Naive thymus-derived CD4-positive, alpha-beta T cell (primary cell): ENCODE measurements at regions of chr4 and their contacts with region 1.

Region 1: DNA sequence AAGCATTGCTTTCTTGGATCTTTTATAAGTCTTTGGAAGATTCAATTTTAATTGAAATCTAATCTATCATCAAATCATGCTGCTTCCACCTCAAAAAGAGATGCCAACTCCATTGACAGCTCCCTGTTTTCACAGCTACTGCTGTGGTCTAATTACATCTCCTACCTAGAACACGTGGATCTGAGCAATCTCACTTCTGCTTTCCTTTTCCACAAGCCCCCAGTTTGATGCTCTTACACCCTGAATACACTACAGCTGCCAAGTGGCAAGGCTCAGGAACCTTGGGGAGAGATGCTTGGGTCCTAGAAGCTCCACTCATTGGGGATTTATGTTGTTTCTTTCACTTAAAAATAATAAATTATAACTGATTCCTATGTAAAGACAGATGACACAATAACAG is 172.0 kb downstream of the CFAP299 start:
- DNase-seq: no peak
- ATAC-seq: no peak
- H3K4me3 ChIP-seq: no peak overlapping the region
- H3K4me3 Mint-ChIP-seq: peak overlapping the region in 1 of 10 donors; percentile 9
- H3K27ac ChIP-seq: no peak overlapping the region
- H3K27ac Mint-ChIP-seq: peak overlapping the region in 5 of 9 donors; percentile 3 to 37 (median 19)
- H3K4me1 ChIP-seq: peaks cover 0 to 15% of the 10 kb centered on the region in 2 donors
- H3K4me1 Mint-ChIP-seq: peaks cover 0 to 65% (median 54%) of the 10 kb centered on the region in 7 donors
- H3K27me3 ChIP-seq: no peaks in the 10 kb centered on the region
- H3K27me3 Mint-ChIP-seq: peaks cover 0 to 3% (median 0%) of the 10 kb centered on the region in 5 donors

Region 2: DNA sequence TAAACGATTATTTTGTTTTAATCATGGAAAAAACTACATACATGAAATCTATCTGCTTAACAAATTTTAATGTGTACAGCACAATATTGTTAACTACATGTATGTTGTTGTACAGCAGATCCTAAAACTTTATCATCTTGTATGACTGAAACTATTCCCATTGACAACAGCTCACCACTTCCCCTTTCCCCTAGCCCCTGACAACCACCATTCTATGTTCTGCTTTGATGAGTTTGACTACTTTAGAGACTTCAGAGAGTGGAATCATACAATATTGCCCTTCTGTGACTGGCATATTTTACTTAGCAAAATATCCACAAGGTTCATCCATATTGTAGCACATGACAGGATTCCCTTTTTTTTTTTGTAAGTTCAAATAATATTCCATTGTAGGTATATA is 13.9 kb after region 1 on chr4:
- CTCF ChIA-PET with region 1: no interaction called
- POLR2A ChIA-PET with region 1: interaction called, 4 read pairs
- intact Hi-C with region 1: loop called in 1 of 2 experiments (anchors 2 kb)
- DNase-seq: no peak
- ATAC-seq: no peak
- H3K4me3 ChIP-seq: no peak overlapping the region
- H3K4me3 Mint-ChIP-seq: no peak overlapping the region
- H3K27ac ChIP-seq: no peak overlapping the region
- H3K27ac Mint-ChIP-seq: no peak overlapping the region
- H3K4me1 ChIP-seq: no peaks in the 10 kb centered on the region
- H3K4me1 Mint-ChIP-seq: peaks cover 0 to 6% (median 0%) of the 10 kb centered on the region in 7 donors
- H3K27me3 ChIP-seq: no peaks in the 10 kb centered on the region
- H3K27me3 Mint-ChIP-seq: no peaks in the 10 kb centered on the region